ENCODE measurements at regions of chr1 and their contacts with region 1.

Region 1: DNA sequence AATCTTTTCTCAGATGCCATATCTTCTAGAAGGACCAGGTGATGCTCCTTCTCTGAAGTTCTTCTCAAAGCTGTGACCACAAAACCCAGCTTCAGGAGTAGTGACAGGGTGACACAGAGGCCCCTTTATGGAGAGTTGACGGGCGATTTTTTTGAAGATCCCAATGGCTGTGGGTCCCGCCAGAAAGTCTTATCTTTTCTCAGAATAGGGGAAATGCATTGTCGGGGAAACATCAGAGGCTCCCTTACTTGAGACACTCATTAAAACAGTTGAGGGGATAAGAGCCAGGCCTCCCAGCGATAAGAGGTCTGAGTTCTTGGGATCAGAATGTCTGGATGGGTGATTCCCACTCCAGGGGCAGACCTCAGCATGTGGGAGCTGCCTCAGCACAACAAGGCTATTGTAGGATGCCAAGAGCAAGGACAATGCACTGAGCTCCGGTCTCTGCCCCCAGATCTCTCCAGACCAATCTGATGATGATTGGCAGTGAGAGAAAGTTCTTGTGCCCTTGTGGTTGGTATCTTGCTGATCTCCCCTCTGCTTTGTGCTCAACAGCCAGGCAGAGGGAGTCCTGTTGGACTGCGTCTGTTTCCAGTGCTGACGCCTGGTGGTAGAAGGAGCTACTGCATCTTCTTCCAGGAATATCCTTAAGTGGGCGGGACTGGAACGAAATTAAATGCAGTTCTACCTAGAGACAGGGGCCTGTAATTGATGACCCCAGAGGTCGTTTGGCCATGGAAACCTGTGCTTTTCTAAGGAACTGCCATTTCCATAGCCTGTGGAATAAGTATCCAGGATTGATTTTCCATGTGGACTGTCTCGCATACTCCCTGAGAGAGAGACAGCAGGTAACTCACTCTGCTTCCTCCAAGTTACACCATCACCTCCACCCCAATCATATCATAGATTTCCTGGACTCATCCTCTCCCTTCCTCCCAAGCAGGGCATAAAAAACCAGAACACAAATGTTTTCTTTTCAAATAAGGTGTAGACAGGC is 6.8 kb upstream of the ACKR1 start:
- DNase-seq: peak in 2 of 3 donors; percentile 42 to 85
- ATAC-seq: peak; percentile 85
- H3K4me3 ChIP-seq: no peak overlapping the region
- H3K4me1 ChIP-seq: no peaks in the 10 kb centered on the region
- CTCF ChIP-seq: peak; percentile 64

Region 2: DNA sequence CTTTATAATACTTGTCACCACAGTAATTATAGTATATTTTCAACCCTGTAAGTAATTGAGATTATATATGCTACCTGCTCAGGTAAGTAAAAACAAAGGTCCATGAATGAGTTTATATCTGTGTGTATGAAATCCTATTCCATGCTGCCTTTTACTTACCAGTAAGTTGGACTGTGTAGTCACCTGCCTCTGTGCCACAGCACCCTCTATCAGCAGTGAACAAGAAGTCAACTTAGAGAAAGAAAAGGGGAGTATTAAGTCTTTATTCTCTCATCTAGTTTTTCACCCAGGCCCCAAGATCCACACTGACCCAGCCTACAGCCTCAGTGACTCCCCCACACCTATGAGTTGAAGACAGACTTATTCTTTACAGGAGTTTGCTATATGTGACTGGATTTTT is 225.0 kb before region 1 on chr1:
- intact Hi-C with region 1: no loop called
- DNase-seq: no peak
- ATAC-seq: no peak
- H3K4me3 ChIP-seq: no peak overlapping the region
- H3K4me1 ChIP-seq: no peaks in the 10 kb centered on the region
- CTCF ChIP-seq: no peak

Region 3: GRCh38 chr1:159161001-159161718 is 36.7 kb before region 1 on chr1:
- intact Hi-C with region 1: loop called in 1 of 2 experiments (anchors 5 kb)
- DNase-seq: peak in 2 of 3 donors; percentile 54 to 70
- ATAC-seq: peak; percentile 94
- H3K4me3 ChIP-seq: no peak overlapping the region
- H3K4me1 ChIP-seq: no peaks in the 10 kb centered on the region
- CTCF ChIP-seq: peak; percentile 75

Region 4: DNA sequence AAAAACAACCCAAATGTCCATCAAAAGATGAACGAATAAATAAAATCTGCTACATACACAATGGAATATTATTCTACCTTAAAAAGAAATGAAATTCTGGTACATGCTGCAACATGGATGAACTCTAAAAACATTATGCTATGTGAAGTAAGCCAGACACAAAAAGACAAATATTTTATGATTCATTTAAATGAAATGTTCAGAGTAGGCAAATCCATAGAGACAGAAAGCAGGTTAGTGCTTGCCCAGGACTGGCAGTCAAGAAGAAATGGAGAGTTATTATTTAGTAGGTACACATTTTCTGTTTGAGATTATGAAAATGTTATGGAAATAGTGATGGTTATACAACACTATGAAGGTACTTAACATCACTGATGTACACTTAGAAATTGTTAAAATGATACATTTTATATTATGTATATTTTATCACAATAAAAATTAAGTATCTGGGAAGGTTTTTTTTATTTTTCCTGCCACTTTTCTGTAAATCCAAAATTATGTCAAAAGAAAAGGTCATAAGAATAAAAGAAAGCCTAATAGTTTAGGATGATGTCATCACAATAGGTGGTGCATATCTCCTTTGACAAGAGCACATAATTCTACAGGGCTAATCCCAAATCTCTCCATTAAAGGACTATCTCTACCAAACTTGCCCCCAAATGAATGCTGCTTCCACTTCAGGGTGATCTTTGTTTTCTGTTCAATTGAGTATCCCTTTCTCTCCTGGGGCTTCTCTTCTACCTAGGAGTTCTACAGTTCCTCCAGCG is 64.0 kb after region 1 on chr1:
- intact Hi-C with region 1: no loop called
- DNase-seq: no peak
- ATAC-seq: no peak
- H3K4me3 ChIP-seq: no peak overlapping the region
- H3K4me1 ChIP-seq: no peaks in the 10 kb centered on the region
- CTCF ChIP-seq: no peak